GM12878 (cell line): ENCODE measurements at regions of chr17 and their contacts with region 1.

Region 1: DNA sequence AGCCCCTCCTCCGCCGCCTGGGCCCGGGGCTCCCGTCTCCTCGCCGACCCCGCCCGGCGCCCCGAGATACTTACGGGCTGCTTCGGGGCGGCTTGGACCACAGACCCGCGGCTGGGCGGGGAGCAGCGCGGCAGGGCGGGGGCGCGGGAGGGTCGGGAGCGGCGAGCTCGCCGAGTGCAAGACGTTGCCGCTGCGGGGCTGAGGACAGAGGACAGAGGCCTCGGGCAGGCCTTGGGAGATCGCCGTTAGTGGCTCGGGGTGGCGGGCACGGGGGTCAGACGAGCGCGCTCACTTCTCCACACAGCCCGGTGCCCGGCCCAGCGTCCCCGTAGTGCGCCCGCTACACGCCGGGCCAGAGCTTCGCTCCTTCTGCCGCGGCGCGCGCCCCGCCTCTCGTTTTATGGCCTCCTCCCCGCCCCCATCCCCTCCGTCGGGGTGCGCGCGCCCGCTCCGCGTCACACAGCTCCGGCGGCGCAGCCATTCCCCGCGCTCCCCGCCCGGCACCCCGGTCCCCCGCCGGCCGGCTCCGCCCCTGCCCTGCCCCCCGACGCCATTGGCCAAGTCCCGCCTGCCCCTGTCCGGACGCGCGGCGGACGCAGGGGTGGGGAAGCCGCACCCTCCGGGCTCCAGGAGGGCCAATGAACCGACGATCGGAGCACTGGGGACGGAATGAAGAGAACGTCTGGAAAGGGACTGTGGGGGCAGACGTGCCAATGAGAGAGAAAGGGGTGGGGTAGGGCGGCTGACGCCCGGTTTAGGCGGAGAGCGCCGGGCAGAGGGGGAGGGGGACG is at the start of gene TOB1:
- DNase-seq: peak; percentile 84
- ATAC-seq: peak; percentile 88
- H3K4me3 ChIP-seq: peak within 1 kb of the TSS; percentile 92
- H3K27ac ChIP-seq: peak within 1 kb of the TSS; percentile 98
- H3K4me1 ChIP-seq: peaks cover under 1% of the 10 kb centered on the region; the same call in 1 of the 2 replicates
- H3K27me3 ChIP-seq: no peaks in the 10 kb centered on the region
- CTCF ChIP-seq: no peak
- EP300 ChIP-seq: no peak; a peak in 1 of 4 replicates
- POLR2A ChIP-seq: peak; percentile 99
- RAD21 ChIP-seq: no peak
- polyA plus RNA-seq, gene TOB1: 19.5 to 28.3 TPM

Region 2: GRCh38 chr17:50604513-50604912 is 261.7 kb before region 1 on chr17:
- CTCF ChIA-PET with region 1: no interaction called
- POLR2A ChIA-PET with region 1: no interaction called
- RAD21 ChIA-PET with region 1: no interaction called
- SMC1A ChIA-PET with region 1: no interaction called
- in situ Hi-C with region 1: no loop called
- intact Hi-C with region 1: no loop called
- DNase-seq: no peak
- ATAC-seq: no peak
- H3K4me3 ChIP-seq: no peak overlapping the region
- H3K27ac ChIP-seq: no peak overlapping the region
- H3K4me1 ChIP-seq: no peaks in the 10 kb centered on the region
- H3K27me3 ChIP-seq: peaks cover 0 to 4% of the 10 kb centered on the region in 2 experiments; a peak in 2 of 4 replicates
- CTCF ChIP-seq: no peak
- EP300 ChIP-seq: no peak
- POLR2A ChIP-seq: no peak
- RAD21 ChIP-seq: no peak

Region 3: GRCh38 chr17:50765454-50766221 is 100.5 kb before region 1 on chr17:
- CTCF ChIA-PET with region 1: no interaction called
- POLR2A ChIA-PET with region 1: interaction called, 10 read pairs
- RAD21 ChIA-PET with region 1: interaction called, 4 read pairs
- SMC1A ChIA-PET with region 1: interaction called, 5 read pairs
- in situ Hi-C with region 1: no loop called
- intact Hi-C with region 1: no loop called
- DNase-seq: peak; percentile 37
- ATAC-seq: peak; percentile 81
- H3K4me3 ChIP-seq: no peak overlapping the region
- H3K27ac ChIP-seq: 0 out of 2 replicates have a peak overlapping the region, but pooled peaks have one; percentile 17
- H3K4me1 ChIP-seq: peaks cover 16% of the 10 kb centered on the region
- H3K27me3 ChIP-seq: no peaks in the 10 kb centered on the region
- CTCF ChIP-seq: no peak
- EP300 ChIP-seq: no peak
- POLR2A ChIP-seq: no peak
- RAD21 ChIP-seq: no peak

Region 4: DNA sequence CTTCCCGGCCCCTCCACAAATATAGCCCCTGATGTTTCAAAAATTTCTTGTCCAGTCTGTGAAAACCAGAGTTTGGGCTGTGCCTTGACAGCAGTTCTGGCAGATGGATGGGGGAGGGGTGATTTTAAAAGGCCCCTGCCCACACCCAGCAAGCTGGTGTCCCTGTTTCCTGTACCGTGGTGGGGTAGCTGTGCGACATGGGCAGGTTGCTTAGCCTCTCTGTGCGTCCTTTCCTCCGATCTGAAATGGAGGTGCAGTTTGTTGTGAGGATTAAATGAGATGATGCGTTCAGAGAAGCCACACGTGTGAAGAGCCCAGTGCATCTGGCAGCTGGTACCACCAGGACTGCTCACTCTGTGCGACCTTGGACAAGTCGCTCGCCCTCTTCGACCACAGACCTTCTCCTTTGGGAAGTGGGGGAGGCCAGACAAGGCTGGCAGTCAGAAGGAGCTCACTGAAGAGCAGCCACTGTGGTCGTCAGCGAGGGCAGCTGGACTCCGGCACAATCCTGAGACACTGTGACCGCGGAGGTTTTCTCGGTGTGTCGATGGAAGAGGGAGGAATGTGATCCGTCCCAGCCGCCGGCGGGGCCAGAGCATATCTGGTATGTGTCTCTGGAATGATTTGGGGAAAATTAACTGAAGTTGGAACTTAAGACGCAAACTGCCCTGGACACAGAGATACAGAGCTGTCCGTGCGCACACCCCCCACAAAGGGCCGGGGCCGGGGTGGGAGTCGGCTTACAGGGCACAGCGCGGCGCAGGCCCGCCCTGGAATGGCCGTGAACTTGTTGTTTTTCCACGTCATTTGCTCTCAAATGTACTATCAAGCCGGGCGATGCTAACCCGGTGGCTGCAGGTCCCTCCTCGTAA is 31.5 kb before region 1 on chr17:
- CTCF ChIA-PET with region 1: no interaction called
- POLR2A ChIA-PET with region 1: no interaction called
- RAD21 ChIA-PET with region 1: no interaction called
- SMC1A ChIA-PET with region 1: no interaction called
- in situ Hi-C with region 1: no loop called
- intact Hi-C with region 1: no loop called
- DNase-seq: no peak
- ATAC-seq: no peak
- H3K4me3 ChIP-seq: no peak overlapping the region
- H3K27ac ChIP-seq: no peak overlapping the region
- H3K4me1 ChIP-seq: peaks cover 4% of the 10 kb centered on the region; the same call in 1 of the 2 replicates
- H3K27me3 ChIP-seq: peaks cover 2 to 4% of the 10 kb centered on the region in 2 experiments; a peak in 3 of 4 replicates
- CTCF ChIP-seq: no peak
- EP300 ChIP-seq: no peak
- POLR2A ChIP-seq: no peak
- RAD21 ChIP-seq: no peak

Region 5: DNA sequence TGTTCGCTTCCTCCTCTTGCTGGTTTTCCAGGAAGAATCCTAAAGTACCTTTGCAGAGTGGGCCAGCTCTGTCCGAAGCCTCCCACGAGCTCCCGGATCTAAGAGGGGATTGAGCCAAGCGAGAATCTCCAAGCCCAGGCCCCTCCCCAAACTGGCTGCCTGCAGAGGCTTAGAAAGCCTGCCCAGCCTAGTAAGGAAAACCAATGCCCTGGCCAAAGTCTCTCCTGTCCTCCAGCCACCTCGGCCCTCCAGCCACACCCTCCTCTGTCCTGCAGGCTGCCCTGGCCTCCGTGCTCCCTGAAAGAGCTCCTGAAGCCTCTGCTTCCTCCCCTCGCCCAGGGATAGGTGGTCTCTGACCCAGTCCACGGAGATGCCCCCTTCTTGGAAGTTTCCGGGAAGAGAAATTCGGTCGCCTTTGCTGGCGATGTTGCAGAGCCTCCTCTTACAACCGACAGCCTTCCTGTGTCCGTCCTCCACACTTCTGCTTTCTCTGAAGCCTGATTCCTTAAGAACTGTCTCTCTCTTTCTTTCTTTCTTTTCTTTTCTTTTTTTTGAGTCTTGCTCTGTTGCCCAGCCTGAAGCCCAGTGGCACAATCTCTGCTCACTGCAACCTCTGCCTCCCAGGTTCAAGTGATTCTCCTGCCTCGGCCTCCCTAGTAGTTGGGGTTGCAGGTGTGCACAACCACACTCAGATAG is 54.9 kb after region 1 on chr17:
- CTCF ChIA-PET with region 1: no interaction called
- POLR2A ChIA-PET with region 1: no interaction called
- RAD21 ChIA-PET with region 1: no interaction called
- SMC1A ChIA-PET with region 1: no interaction called
- in situ Hi-C with region 1: no loop called
- intact Hi-C with region 1: no loop called
- DNase-seq: no peak
- ATAC-seq: no peak
- H3K4me3 ChIP-seq: no peak overlapping the region
- H3K27ac ChIP-seq: no peak overlapping the region
- H3K4me1 ChIP-seq: peaks cover 20% of the 10 kb centered on the region
- H3K27me3 ChIP-seq: no peaks in the 10 kb centered on the region
- CTCF ChIP-seq: no peak
- EP300 ChIP-seq: no peak
- POLR2A ChIP-seq: no peak
- RAD21 ChIP-seq: no peak

Region 6: DNA sequence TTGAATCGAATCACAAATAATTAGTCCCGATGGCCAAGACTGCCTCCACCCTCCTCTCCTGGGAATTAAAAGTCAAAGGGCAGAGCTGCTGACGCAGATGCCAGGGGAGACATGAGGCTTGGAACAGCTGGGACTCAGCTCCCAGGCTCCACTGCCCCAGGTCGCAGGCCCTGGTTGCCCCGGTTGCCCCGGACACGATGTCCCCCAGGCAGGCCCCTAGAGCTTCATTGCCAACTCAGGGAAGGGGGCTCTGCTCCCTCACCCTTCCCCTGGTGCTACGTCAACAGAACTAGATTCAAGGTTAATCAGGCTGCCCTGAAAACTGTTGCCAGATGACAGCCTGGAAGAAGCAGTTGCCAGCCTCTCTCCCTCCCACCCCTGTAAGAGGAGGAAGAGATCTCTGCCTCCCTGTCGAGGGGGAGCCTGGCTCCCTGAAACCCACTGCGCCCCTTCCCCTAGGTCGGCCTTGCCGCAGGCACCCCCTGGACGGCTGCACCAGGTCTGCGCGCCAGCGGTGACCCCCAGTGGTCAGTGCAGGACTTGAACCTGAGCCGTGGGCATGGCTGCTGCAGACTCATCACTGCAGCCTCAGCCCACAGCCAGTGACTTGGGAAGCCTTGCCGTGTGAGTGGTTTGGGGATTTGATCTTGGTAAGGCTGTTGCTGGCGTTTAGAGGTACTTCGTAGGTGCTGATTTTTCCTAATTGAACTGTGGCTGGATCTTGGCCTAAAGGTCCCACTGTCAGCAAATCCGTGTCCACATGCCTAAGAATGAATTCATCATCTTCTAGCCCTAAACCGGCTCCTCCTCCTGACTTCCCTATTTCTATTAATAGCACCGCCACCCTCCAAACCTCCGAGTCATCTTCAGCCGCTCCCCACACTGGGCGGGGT is 84.1 kb after region 1 on chr17:
- CTCF ChIA-PET with region 1: interaction called, 41 read pairs
- POLR2A ChIA-PET with region 1: interaction called, 4 read pairs
- RAD21 ChIA-PET with region 1: interaction called, 5 read pairs
- SMC1A ChIA-PET with region 1: interaction called, 4 read pairs
- in situ Hi-C with region 1: no loop called
- intact Hi-C with region 1: no loop called
- DNase-seq: no peak
- ATAC-seq: peak; percentile 95
- H3K4me3 ChIP-seq: no peak overlapping the region
- H3K27ac ChIP-seq: no peak overlapping the region
- H3K4me1 ChIP-seq: peaks cover 20% of the 10 kb centered on the region
- H3K27me3 ChIP-seq: no peaks in the 10 kb centered on the region
- CTCF ChIP-seq: peak; percentile 66 to 76 (median 66)
- EP300 ChIP-seq: no peak
- POLR2A ChIP-seq: no peak
- RAD21 ChIP-seq: peak; percentile 88

Region 7: GRCh38 chr17:51046514-51047384 is 180.6 kb after region 1 on chr17:
- CTCF ChIA-PET with region 1: no interaction called
- POLR2A ChIA-PET with region 1: no interaction called
- RAD21 ChIA-PET with region 1: no interaction called
- SMC1A ChIA-PET with region 1: no interaction called
- in situ Hi-C with region 1: no loop called
- intact Hi-C with region 1: loop called (anchors 5 kb)
- DNase-seq: no peak
- ATAC-seq: no peak
- H3K4me3 ChIP-seq: no peak overlapping the region
- H3K27ac ChIP-seq: no peak overlapping the region
- H3K4me1 ChIP-seq: peaks cover 29% of the 10 kb centered on the region
- H3K27me3 ChIP-seq: no peaks in the 10 kb centered on the region
- CTCF ChIP-seq: no peak
- EP300 ChIP-seq: no peak
- POLR2A ChIP-seq: no peak
- RAD21 ChIP-seq: no peak

Region 8: GRCh38 chr17:51260125-51260880 is 394.1 kb after region 1 on chr17 and contains the start of gene UTP18:
- CTCF ChIA-PET with region 1: no interaction called
- POLR2A ChIA-PET with region 1: no interaction called
- RAD21 ChIA-PET with region 1: no interaction called
- SMC1A ChIA-PET with region 1: no interaction called
- in situ Hi-C with region 1: no loop called
- intact Hi-C with region 1: loop called (anchors 10 kb)
- DNase-seq: peak; percentile 89
- ATAC-seq: peak; percentile 77
- H3K4me3 ChIP-seq: peak within 1 kb of the TSS; percentile 92
- H3K27ac ChIP-seq: peak within 1 kb of the TSS; percentile 100
- H3K4me1 ChIP-seq: peaks cover 8% of the 10 kb centered on the region
- H3K27me3 ChIP-seq: no peaks in the 10 kb centered on the region
- CTCF ChIP-seq: no peak
- EP300 ChIP-seq: no peak
- POLR2A ChIP-seq: peak; percentile 61; the same call in 1 of the 2 replicates
- RAD21 ChIP-seq: no peak
- polyA plus RNA-seq, gene UTP18: 31.0 to 59.2 TPM